Activated T-helper 2 cell treated with anti-CD3 and anti-CD28 coated beads, Interferon-gamma antibody, Interleukin-2, Interleukin-4, amounts not matched to agents 10 μg/mL and 5 μg/mL and 100 μg/mL, durations not matched to agents 14 hours and 24 hours and 36 hours (primary cell): ENCODE measurements at regions of chr11 and their contacts with region 1.

Region 1: DNA sequence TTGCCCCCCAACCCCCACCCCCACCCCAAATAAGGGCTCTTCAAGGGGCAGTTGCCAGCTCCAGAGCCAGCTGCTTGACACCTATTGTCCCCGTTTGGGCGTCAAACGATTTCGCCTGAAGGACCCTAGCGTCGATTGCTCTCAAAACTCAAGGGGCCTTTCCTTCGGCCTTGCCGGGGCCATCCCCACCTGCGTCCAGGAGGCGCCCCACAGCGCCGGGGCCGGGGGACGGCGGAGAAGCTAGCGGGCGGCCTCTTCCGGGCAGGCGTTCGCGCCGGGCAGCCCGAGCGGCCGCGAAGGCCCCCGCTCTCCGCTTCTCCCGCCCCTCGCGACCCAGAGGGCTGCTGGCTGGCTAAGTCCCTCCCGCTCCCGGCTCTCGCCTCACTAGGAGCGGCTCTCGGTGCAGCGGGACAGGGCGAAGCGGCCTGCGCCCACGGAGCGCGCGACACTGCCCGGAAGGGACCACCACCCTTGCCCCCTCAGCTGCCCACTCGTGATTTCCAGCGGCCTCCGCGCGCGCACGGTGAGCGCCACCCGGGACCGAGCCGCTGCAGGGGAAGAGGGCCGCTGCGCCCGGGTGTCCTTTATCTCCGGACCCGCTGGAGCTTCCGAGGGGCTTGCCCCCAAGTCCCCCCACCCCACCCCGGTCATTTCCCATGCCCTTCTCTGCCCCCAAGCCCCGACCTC is at the start of gene CAPRIN1:
- DNase-seq: peak; percentile 83
- H3K4me3 Mint-ChIP-seq: peak within 1 kb of the TSS; percentile 93
- H3K27ac Mint-ChIP-seq: peak within 1 kb of the TSS; percentile 96
- H3K4me1 Mint-ChIP-seq: peaks cover 17% of the 10 kb centered on the region
- H3K27me3 Mint-ChIP-seq: peaks cover 5% of the 10 kb centered on the region
- total RNA-seq, gene CAPRIN1: 285 and 286 TPM in 2 replicates

Region 2: DNA sequence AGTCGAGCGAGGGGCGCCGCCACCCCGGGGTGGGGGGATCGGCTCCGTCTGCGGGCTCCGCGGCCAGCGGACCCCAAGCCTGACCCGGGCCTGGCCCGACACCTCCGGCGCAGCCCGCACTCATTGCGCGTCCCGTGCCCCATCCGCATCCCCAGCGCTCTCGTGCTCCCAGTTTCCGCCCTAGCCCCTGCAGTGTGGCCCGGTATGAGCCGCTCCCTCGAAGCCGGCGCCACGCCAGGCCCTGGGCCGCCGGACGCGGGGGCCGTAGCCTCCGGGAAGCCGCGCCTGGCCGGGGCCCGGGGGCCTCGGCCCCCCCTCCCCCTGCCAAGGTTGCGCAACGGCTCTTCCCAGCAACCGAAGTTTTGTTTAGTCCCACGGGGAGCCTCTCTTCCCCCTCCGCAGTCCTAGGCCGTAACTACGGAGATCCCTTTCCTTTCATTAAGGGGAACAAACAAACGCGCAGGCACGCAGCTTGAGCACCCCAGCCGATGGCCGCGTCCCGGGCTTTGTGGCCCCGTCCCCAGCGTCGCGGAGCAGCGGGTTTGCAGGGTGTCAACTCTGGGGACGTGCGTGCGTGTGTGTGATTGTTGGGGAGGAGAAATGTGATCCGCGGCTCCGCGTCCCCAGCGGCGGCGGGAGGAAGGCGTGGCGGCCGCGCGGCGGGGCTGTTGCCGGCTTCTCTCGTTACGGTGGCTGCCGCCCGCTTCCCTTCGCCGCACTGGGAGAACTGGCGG is 793.4 kb before region 1 on chr11:
- intact Hi-C with region 1: loop called (anchors 5 kb)
- DNase-seq: peak; percentile 75
- H3K4me3 Mint-ChIP-seq: peak overlapping the region; percentile 86
- H3K27ac Mint-ChIP-seq: peak overlapping the region; percentile 99
- H3K4me1 Mint-ChIP-seq: peaks cover 32% of the 10 kb centered on the region
- H3K27me3 Mint-ChIP-seq: no peaks in the 10 kb centered on the region

Region 3: GRCh38 chr11:33736148-33736809 is 315.2 kb before region 1 on chr11 and contains the start of gene CD59:
- intact Hi-C with region 1: loop called (anchors 10 kb)
- DNase-seq: peak; percentile 79
- H3K4me3 Mint-ChIP-seq: peak within 1 kb of the TSS; percentile 87
- H3K27ac Mint-ChIP-seq: peak within 1 kb of the TSS; percentile 86
- H3K4me1 Mint-ChIP-seq: peaks cover 35% of the 10 kb centered on the region
- H3K27me3 Mint-ChIP-seq: peaks cover 12% of the 10 kb centered on the region
- total RNA-seq, gene CD59: 165 and 173 TPM in 2 replicates

Region 4: GRCh38 chr11:33996498-33997454 is 54.7 kb before region 1 on chr11:
- intact Hi-C with region 1: loop called (anchors 2 kb)
- DNase-seq: peak; percentile 65
- H3K4me3 Mint-ChIP-seq: no peak overlapping the region
- H3K27ac Mint-ChIP-seq: no peak overlapping the region
- H3K4me1 Mint-ChIP-seq: peaks cover 9% of the 10 kb centered on the region
- H3K27me3 Mint-ChIP-seq: peaks cover 30% of the 10 kb centered on the region

Region 5: DNA sequence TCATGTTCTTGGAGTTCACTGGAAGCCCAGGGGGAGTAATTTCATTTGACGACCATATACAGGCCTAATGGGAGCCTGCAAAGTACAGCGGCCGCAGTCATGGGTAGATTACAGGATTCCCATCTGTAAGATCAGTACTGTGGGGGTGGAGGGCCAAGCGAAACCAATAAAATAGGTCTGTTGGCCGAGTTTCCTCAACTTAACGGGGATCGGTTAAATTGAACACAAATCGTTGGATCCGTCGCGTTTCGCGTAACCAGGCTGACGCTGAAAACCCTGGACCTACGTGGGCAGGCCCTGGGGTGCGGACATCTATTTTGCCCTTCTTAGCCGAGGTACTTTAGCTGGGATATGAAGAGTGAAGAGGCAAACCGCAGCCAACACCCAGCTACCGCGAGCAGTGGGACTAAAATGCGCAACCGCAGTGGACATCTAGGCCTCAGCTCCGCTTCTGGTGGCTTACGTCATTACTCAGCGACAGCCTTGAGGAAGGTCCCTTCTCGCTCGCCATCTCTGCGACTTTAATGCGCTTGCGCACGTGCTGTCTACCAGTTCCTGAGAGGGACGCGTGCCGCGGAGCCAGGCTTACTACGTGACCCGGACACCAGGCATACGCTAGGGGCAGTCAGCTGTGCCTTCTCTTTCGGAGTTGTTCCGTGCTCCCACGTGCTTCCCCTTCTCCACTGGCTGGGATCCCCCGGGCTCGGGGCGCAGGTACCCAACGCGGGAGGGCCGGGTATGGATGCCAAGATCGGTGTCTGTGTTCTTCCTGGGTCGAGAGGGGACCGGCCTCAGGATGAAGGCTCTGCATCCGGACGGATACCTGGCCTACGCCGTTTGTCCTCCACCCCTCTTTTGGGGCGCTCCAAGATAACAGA is 53.8 kb after region 1 on chr11 and contains the start of gene NAT10:
- intact Hi-C with region 1: loop called (anchors 1 kb)
- DNase-seq: peak; percentile 97
- H3K4me3 Mint-ChIP-seq: peak within 1 kb of the TSS; percentile 95
- H3K27ac Mint-ChIP-seq: peak within 1 kb of the TSS; percentile 94
- H3K4me1 Mint-ChIP-seq: peaks cover 33% of the 10 kb centered on the region
- H3K27me3 Mint-ChIP-seq: no peaks in the 10 kb centered on the region
- total RNA-seq, gene NAT10: 124 and 125 TPM in 2 replicates

Region 6: GRCh38 chr11:34438529-34439507 is 387.3 kb after region 1 on chr11 and contains the start of gene CAT:
- intact Hi-C with region 1: loop called (anchors 1 kb)
- DNase-seq: peak; percentile 97
- H3K4me3 Mint-ChIP-seq: peak within 1 kb of the TSS; percentile 90
- H3K27ac Mint-ChIP-seq: peak within 1 kb of the TSS; percentile 89
- H3K4me1 Mint-ChIP-seq: peaks cover 23% of the 10 kb centered on the region
- H3K27me3 Mint-ChIP-seq: no peaks in the 10 kb centered on the region
- total RNA-seq, gene CAT: 31.8 and 33.1 TPM in 2 replicates